Sigmoid colon (tissue), 7 donors: ENCODE measurements at regions of chr10 and their contacts with region 1.

Region 1: DNA sequence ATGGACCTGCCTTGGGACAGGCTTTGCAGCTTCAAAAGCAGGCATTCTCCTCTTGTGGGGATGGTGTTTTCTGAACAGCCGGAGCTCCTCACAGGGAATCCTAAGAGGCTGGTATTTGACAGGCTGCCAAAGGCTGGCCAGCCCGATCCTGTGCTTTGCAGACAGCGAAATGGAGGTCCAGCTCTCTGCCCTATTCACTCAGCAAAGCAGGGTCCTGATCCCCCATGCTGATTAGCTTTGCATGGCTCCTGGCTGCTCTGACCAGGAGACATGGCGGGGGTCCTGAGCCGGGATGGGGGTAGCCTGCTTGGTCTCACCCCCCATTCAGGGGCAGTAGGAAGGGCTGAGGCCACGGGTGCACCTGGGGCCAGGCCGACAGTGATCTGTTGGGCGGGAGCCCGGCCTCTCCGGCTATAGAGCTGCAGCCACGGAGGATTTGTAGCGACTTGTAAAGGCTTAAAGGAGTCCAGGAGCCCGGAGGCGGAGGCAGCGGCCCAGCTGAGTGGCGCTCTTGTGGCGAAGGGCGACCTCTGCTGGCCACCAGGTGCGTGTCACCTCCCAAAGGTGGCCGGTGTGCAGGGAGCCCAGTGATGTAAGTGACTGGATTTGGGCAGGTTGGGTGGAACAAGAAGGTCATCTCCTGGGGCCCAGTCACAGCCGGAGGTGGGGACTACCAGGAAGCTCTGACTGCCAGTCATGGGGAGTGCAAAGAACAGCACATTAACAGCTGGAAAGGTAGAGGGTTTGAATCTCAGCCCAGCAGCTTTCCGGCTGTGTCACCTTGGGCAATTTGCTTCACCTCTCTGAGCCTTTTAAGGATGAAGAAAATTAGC is 126.5 kb downstream of the ZMIZ1 start:
- DNase-seq: peak; percentile 95
- H3K4me3 ChIP-seq: no peak overlapping the region
- H3K27ac ChIP-seq: peak overlapping the region; percentile 78 to 86 (median 80)
- H3K4me1 ChIP-seq: peaks cover 0 to 51% (median 48%) of the 10 kb centered on the region in 4 donors
- H3K27me3 ChIP-seq: no peaks in the 10 kb centered on the region
- CTCF ChIP-seq: peak; percentile 92 to 97 (median 94)
- EP300 ChIP-seq: peak in 1 of 4 donors; percentile 17
- POLR2A ChIP-seq: no peak

Region 2: GRCh38 chr10:78047314-78047891 is 1147.9 kb before region 1 on chr10:
- intact Hi-C with region 1: loop called (anchors 1 kb)
- DNase-seq: peak; percentile 91
- H3K4me3 ChIP-seq: no peak overlapping the region
- H3K27ac ChIP-seq: peak overlapping the region in 1 of 4 donors; percentile 6
- H3K4me1 ChIP-seq: peaks cover 0 to 16% (median 9%) of the 10 kb centered on the region in 4 donors
- H3K27me3 ChIP-seq: no peaks in the 10 kb centered on the region
- CTCF ChIP-seq: peak; percentile 83 to 88 (median 86)
- EP300 ChIP-seq: no peak
- POLR2A ChIP-seq: no peak

Region 3: DNA sequence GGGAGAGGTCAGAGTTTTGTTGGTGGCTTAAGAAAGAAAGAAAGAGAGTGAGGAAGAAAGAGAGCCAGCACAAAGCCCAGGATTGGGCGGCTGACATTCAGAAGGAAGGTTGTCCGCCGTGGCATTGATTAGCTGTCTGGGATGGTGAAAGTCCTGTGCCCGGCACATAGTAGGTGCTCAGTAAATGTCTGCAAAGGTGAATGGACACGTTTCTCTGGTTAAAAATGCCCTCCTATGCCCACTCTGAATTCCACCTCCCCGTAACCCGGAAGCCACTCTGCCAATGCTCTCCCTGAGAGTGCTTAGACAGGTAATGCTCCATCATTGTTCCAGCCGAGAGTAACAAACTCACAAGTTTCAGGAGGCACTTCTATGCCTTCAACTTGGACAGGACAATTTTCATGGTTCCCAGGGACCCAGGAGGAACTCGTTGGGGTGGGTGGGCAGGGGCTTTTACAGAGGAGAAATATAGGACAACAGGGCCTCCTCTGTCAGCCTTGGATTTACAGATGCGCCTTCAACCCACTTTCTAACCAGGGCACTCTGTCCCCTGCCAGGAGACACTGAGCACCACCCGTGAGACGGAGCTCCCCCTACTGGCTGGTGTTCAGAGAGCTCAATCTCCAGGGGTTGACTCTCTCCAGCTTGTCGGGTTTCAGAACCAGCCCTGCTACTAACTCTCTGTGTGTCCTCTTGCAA is 538.0 kb before region 1 on chr10:
- intact Hi-C with region 1: loop called (anchors 5 kb)
- DNase-seq: peak; percentile 91
- H3K4me3 ChIP-seq: no peak overlapping the region
- H3K27ac ChIP-seq: peak overlapping the region in 3 of 4 donors; percentile 61 to 73 (median 70)
- H3K4me1 ChIP-seq: peaks cover 0 to 39% (median 18%) of the 10 kb centered on the region in 4 donors
- H3K27me3 ChIP-seq: no peaks in the 10 kb centered on the region
- CTCF ChIP-seq: peak; percentile 46 to 74 (median 60)
- EP300 ChIP-seq: no peak
- POLR2A ChIP-seq: no peak

Region 4: GRCh38 chr10:78972947-78973900 is 222.1 kb before region 1 on chr10:
- intact Hi-C with region 1: loop called (anchors 5 kb)
- DNase-seq: peak; percentile 91
- H3K4me3 ChIP-seq: peak overlapping the region; percentile 30 to 57 (median 49)
- H3K27ac ChIP-seq: peak overlapping the region; percentile 94 to 99 (median 96)
- H3K4me1 ChIP-seq: peaks cover 0 to 61% (median 51%) of the 10 kb centered on the region in 4 donors
- H3K27me3 ChIP-seq: no peaks in the 10 kb centered on the region
- CTCF ChIP-seq: peak in 1 of 4 experiments; percentile 10
- EP300 ChIP-seq: peak; percentile 5 to 86 (median 68)
- POLR2A ChIP-seq: peak in 1 of 2 donors; percentile 14

Region 5: DNA sequence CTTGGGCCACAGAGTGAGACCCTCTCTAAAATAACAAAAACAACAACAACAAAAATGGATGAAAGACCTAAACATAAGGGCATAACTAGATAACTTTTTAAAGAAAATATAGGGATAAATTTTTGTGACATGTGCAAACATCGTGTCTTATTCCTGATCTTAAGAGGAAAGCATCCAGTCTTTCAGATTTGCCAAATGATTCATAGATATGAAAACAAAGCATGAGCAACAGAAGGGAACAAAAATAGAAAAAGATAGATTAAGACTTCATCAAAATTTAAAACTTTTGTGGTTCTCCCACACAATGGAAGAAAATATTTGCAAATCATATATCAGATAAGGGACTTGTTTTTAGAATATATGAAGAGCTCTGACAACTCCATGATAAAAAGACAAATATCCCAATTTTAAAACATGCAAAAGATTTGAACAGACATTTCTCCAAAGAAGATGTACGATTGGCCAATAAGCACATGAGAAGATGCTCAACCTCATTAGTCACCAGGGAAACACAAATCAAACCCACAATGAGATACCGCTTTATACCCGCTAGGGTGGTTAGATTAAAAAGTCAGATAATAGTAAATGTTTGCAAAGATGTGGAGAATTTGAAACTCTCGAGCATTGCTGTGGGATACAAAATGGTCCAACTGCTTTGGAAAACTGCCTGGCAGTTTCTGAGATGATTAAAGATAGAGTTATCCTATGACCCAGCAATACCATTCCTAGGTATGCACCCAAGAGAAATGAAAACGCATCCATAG is 172.3 kb after region 1 on chr10:
- intact Hi-C with region 1: no loop called
- DNase-seq: no peak
- H3K4me3 ChIP-seq: no peak overlapping the region
- H3K27ac ChIP-seq: no peak overlapping the region
- H3K4me1 ChIP-seq: no peaks in the 10 kb centered on the region
- H3K27me3 ChIP-seq: no peaks in the 10 kb centered on the region
- CTCF ChIP-seq: no peak
- EP300 ChIP-seq: no peak
- POLR2A ChIP-seq: no peak